ENCODE measurements at regions of chr21 and their contacts with region 1.

Region 1: GRCh38 chr21:16285605-16286126 is 555.9 kb downstream of the USP25 start:
- DNase-seq: no peak
- ATAC-seq: no peak
- H3K4me3 ChIP-seq: no peak overlapping the region
- H3K27ac ChIP-seq: no peak overlapping the region
- H3K4me1 ChIP-seq: no peaks in the 10 kb centered on the region
- H3K27me3 ChIP-seq: no peaks in the 10 kb centered on the region
- CTCF ChIP-seq: no peak

Region 2: DNA sequence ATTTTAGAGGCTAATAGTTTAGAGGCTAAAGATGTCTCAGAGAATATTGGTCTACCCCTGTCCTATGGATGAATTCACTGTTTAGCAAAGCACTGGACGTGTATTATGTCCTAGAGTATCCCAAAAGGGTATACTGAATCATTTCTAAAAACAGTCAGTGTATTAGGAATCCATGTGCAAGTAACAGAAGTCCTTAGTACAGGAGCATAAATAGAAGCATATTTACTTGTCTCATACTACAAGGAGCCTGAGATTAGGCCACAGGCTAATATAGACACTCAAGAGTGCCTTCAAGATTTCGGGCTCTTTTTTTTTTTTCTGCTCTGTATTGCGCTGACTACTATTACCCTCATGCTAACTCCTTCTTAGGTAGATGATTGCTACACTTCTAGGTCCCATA is 37.0 kb before region 1 on chr21:
- intact Hi-C with region 1: loop called in 1 of 2 experiments (anchors 5 kb)
- DNase-seq: no peak
- ATAC-seq: no peak
- H3K4me3 ChIP-seq: no peak overlapping the region
- H3K27ac ChIP-seq: no peak overlapping the region
- H3K4me1 ChIP-seq: no peaks in the 10 kb centered on the region
- H3K27me3 ChIP-seq: no peaks in the 10 kb centered on the region
- CTCF ChIP-seq: no peak

Region 3: DNA sequence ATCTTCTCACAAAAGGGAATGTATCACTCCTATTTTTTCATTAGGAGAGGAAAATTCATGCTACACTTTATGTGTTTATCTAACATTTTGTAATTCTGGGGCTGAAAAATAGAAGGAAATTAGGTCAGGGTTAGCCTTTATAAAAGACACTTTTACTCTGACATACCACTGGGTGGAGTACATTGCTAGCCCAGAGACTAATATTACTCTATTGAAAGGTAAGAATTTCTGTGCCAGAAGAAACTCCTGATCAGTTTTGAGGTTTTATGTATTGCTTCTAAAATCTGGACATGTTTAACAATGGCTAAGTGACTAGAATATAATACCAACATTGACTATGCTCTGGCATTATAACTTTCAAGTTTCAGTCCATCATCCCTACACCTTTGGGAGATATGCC is 168.7 kb after region 1 on chr21:
- intact Hi-C with region 1: no loop called
- DNase-seq: no peak
- ATAC-seq: peak; percentile 47
- H3K4me3 ChIP-seq: no peak overlapping the region
- H3K27ac ChIP-seq: no peak overlapping the region
- H3K4me1 ChIP-seq: no peaks in the 10 kb centered on the region
- H3K27me3 ChIP-seq: no peaks in the 10 kb centered on the region
- CTCF ChIP-seq: no peak

Region 4: DNA sequence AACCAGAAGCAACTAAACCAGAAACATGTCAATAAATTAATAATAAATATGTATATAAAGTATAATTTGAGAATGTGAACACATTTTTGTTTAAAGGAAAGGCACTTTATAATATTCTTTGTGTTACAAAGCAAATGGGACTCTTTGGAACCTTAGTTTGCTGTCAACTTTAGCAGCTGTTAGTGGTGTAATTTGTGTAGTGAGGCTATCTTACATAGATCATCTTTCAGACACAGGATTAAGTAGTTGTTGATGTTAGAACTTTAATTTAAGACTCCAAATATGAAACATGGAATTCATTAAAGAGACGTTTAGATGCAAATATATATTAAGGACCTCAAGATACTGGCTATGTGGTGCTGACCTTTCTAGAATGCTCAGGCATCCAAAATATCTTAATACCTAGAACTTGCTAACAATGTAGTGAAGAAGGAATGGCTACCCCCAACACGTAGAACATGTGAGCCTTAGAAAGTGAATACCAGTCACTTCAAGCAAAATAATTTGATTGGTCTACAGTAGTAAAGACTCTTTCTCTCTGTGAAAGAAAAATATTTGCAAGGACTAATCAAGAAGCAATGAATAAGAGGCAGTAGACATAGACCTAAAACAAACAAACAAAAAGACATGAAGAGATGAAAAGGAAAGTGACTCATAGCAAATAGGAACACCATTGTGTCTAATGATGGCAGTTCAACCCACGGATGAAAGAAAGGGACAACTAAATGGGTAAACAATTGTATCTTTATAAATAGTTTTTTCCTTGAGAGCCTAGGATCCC is 255.5 kb after region 1 on chr21:
- intact Hi-C with region 1: no loop called
- DNase-seq: no peak
- ATAC-seq: no peak
- H3K4me3 ChIP-seq: no peak overlapping the region
- H3K27ac ChIP-seq: no peak overlapping the region
- H3K4me1 ChIP-seq: no peaks in the 10 kb centered on the region
- H3K27me3 ChIP-seq: no peaks in the 10 kb centered on the region
- CTCF ChIP-seq: no peak